ENCODE measurements at regions of chr15 and their contacts with region 1.

Region 1: DNA sequence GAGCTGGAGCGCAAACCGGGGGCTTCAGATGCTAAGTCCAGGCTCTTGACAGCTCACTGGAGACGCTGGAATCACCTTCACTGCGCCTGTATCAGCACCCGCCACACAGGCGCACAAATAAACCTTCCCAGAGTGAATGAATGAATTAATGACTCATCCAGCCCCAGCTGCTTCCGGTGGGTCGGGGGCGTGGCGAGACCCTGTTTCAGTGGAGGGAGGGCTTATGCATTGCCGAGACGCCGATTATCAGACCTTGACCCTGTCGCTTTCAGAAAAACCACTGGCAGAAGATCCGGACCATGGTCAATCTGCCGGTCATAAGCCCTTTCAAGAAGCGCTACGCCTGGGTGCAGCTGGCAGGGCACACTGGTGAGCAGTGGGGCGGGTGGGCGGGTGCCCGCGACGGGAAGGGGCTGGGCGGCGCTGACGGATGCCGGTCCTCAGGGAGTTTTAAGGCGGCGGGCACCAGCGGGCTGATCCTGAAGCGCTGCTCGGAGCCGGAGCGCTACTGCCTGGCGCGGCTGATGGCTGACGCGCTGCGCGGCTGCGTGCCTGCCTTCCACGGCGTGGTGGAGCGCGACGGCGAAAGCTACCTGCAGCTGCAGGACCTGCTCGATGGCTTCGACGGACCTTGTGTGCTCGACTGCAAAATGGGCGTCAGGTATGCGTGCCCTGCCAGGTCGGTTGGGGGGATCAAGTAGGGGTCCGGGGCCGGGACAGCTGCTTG is 7.7 kb downstream of the ITPKA start:
- DNase-seq: peak; percentile 83
- H3K4me3 Mint-ChIP-seq: peak overlapping the region; percentile 76
- H3K27ac Mint-ChIP-seq: no peak overlapping the region
- H3K4me1 Mint-ChIP-seq: peaks cover 15% of the 10 kb centered on the region
- H3K27me3 Mint-ChIP-seq: peaks cover 76% of the 10 kb centered on the region

Region 2: GRCh38 chr15:41079717-41080116 is 421.6 kb before region 1 on chr15:
- intact Hi-C with region 1: no loop called
- DNase-seq: no peak
- H3K4me3 Mint-ChIP-seq: no peak overlapping the region
- H3K27ac Mint-ChIP-seq: no peak overlapping the region
- H3K4me1 Mint-ChIP-seq: no peaks in the 10 kb centered on the region
- H3K27me3 Mint-ChIP-seq: no peaks in the 10 kb centered on the region

Region 3: DNA sequence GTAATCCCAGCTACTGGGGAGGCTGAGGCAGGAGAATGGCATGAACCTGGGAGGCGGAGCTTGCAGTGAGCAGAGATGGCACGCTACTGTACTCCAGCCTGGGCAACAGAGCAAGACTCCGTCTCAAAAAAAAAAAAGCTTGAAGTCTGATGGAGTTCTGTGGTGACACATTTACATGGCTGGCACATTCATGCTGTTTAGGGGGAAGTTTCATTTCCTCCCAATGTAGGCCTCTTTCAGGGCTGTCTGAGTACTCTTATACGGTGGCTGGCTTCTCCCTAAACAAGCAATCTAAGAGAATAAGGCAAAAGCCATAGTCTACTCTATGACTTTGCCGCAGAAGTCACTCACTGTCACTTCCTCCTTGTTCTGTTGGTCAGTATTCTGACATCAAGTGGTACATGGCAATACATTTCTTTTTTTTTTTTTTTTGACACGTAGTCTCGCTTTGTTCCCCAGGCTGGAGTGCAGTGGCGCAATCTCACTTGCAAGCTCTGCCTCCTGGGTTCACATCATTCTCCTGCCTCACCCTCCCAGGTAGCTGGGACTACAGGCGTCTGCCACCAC is 210.2 kb before region 1 on chr15:
- intact Hi-C with region 1: no loop called
- DNase-seq: no peak
- H3K4me3 Mint-ChIP-seq: no peak overlapping the region
- H3K27ac Mint-ChIP-seq: no peak overlapping the region
- H3K4me1 Mint-ChIP-seq: peaks cover 27% of the 10 kb centered on the region
- H3K27me3 Mint-ChIP-seq: no peaks in the 10 kb centered on the region

Region 4: DNA sequence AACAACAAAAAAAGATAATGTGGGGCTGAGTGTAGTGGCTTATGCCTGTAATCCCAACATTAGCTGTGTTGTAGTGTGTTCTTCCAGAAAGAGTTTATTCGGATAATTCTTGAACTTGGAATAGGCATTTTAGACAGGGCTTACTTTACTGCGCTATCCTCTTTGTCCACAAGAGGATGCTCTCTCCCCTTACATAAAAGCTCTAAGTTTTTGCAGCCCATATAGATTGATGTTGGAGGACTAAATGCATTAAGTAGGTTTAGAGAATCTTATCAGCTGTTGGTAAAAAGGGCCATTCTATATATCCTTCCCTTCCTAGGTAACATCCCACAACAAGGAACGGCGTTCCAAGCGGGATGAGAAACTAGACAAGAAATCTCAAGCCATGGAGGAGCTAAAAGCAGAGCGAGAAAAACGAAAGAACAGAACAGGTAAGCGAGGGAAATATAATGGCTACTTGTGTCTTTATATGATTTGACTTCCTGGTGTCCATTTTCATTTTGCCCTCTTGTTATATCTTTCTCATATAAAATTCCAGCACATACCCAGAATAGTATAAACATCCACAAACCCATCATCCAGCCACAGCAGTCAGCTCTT is 35.4 kb before region 1 on chr15:
- intact Hi-C with region 1: loop called (anchors 5 kb)
- DNase-seq: peak; percentile 83
- H3K4me3 Mint-ChIP-seq: no peak overlapping the region
- H3K27ac Mint-ChIP-seq: no peak overlapping the region
- H3K4me1 Mint-ChIP-seq: peaks cover 6% of the 10 kb centered on the region
- H3K27me3 Mint-ChIP-seq: no peaks in the 10 kb centered on the region

Region 5: DNA sequence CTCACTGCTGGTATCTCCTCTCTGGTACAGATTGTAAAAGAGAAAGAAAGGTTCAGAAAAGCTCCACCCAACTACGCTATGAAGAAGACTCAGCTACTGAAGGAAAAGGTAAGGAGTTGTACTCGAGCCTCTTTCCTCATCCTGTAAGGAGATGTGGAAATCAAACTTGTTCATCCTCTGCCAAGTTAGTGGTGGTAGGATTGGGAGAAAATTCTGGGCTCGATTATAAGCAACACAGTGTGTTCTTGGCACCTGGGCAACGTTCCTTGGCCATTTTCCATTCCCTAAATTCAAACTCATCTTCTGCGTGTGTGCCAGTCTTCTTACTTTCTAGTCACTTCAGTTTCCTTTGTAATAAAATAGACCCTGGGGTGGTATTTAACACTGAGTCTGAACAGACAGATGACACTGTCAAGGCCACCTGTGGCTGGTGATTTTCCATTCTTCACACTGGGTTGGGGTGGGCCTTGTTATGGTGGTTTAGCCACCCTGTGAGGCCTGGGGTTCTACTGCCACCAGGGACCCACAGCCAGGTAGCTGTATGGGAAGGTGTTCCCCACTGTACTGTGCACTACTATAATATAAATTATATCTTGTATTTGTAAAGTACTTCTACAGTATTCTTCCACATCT is 24.8 kb before region 1 on chr15:
- intact Hi-C with region 1: no loop called
- DNase-seq: no peak
- H3K4me3 Mint-ChIP-seq: no peak overlapping the region
- H3K27ac Mint-ChIP-seq: no peak overlapping the region
- H3K4me1 Mint-ChIP-seq: peaks cover 10% of the 10 kb centered on the region
- H3K27me3 Mint-ChIP-seq: no peaks in the 10 kb centered on the region

Region 6: GRCh38 chr15:41512940-41513510 is 11.7 kb after region 1 on chr15:
- intact Hi-C with region 1: loop called (anchors 1 kb)
- DNase-seq: peak; percentile 79
- H3K4me3 Mint-ChIP-seq: peak overlapping the region; percentile 77
- H3K27ac Mint-ChIP-seq: no peak overlapping the region
- H3K4me1 Mint-ChIP-seq: peaks cover 20% of the 10 kb centered on the region
- H3K27me3 Mint-ChIP-seq: peaks cover 42% of the 10 kb centered on the region

Measured in activated CD4-positive, alpha-beta T cell treated with anti-CD3 and anti-CD28 coated beads, Interleukin-2, amount 10 ng/mL, durations not matched to agents 24 days and 14 days (primary cell).